Aorta (tissue), 5 donors: ENCODE measurements at regions of chr10 and their contacts with region 1.

Region 1: GRCh38 chr10:17001961-17002749 is 127.5 kb downstream of the CUBN start:
- DNase-seq: no peak
- ATAC-seq: peak; percentile 90
- H3K4me3 ChIP-seq: peak overlapping the region in 1 of 2 donors; percentile 32
- H3K27ac ChIP-seq: peak overlapping the region; percentile 87 to 99
- H3K4me1 ChIP-seq: peaks cover 0 to 8% of the 10 kb centered on the region in 2 donors
- H3K27me3 ChIP-seq: no peaks in the 10 kb centered on the region

Region 2: GRCh38 chr10:16843252-16843870 is 158.8 kb before region 1 on chr10:
- intact Hi-C with region 1: loop called (anchors 5 kb)
- DNase-seq: no peak
- ATAC-seq: peak; percentile 81
- H3K4me3 ChIP-seq: no peak overlapping the region
- H3K27ac ChIP-seq: no peak overlapping the region
- H3K4me1 ChIP-seq: no peaks in the 10 kb centered on the region
- H3K27me3 ChIP-seq: no peaks in the 10 kb centered on the region

Region 3: DNA sequence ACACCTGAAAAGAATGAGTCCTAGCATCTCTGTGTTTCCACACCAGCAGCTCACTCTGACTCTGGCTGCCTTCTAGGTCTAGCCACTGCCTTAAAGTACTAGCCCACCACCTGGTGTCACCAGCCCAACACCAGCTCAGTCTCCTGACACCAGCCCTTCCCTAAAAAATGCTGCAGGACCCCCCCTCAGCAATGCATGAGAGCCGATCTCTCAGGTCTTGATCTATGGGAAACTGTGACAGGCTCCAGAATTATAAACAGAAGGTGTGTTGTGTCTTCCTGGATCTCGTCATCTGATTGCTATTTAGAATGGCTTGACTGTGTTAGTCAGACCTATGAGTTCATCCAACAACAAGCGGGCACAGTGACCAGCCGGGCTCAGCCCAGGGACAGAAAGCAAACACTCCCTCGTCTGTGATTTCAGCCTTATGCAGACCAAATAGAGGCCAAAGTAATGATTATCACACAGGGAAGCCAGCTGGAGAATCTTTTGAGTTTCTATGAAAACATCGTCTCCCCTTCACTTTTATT is 60.9 kb after region 1 on chr10:
- intact Hi-C with region 1: loop called in 1 of 2 experiments (anchors 10 kb)
- DNase-seq: peak; percentile 81 to 86
- ATAC-seq: peak; percentile 88
- H3K4me3 ChIP-seq: no peak overlapping the region
- H3K27ac ChIP-seq: peak overlapping the region; percentile 23 to 100
- H3K4me1 ChIP-seq: peaks cover 0 to 2% of the 10 kb centered on the region in 2 donors
- H3K27me3 ChIP-seq: no peaks in the 10 kb centered on the region

Region 4: DNA sequence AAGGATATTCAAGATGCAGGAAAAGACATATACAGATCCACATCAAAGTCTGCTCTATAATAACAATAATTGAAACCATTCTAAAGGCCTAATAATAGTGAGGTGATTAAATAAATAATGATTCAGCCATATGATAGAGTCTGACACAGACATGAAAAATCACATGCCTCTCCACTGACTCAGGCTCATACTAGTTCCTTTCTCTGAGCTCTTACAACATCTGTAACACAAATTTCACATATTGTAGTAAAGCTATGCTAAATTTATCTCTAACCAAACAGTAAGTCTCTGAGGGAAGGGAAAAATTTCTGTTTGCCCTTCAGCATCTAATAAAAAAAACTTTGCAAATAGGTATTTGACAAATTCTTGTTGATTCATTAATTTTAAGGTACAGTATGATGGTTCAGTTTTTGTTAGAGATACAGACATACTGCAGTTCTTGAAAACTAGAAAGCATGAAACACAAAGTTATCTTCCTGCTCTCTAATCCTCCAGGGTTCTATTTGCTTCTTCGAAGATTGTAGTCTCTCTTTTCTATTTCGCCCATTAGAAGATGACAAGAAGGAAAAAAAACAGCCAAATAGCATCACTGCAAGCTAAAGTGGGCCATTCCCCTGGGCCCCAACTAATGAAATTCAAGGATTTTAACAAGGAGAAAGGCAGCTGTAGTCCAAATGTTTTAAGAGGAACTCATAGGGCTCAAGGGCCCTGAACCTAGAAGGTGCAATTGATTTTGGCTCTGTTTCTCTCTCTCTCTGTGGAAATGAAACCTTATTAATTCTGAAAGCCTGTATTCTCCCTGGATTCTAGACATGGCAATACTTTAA is 73.6 kb after region 1 on chr10:
- intact Hi-C with region 1: loop called in 1 of 2 experiments (anchors 5 kb)
- DNase-seq: no peak
- ATAC-seq: peak; percentile 84
- H3K4me3 ChIP-seq: peak overlapping the region in 1 of 2 donors; percentile 26
- H3K27ac ChIP-seq: peak overlapping the region; percentile 84 to 90
- H3K4me1 ChIP-seq: peaks cover 2 to 9% of the 10 kb centered on the region in 2 donors
- H3K27me3 ChIP-seq: no peaks in the 10 kb centered on the region

Region 5: DNA sequence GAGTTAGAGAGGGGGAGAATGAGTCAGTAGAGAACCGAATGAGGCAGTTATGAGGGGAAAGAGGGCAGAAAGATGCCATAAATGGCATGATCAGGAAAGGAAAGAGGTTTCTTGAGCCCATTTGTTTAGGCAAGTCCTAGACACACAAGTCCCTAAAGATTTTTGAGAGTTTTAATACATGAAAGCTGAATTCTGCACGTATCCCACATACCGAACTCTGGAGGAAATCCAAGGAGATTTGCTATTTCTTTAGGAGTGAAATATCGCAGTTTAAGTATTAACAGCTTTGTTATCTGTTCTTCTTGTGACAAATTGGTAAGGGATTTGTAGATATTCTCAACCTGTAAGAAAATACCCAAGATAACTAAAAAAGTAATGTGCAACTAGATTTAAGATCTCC is 151.1 kb after region 1 on chr10:
- intact Hi-C with region 1: loop called in 1 of 2 experiments (anchors 10 kb)
- DNase-seq: no peak
- ATAC-seq: no peak
- H3K4me3 ChIP-seq: no peak overlapping the region
- H3K27ac ChIP-seq: peak overlapping the region; percentile 97
- H3K4me1 ChIP-seq: peaks cover 3 to 5% of the 10 kb centered on the region in 2 donors
- H3K27me3 ChIP-seq: no peaks in the 10 kb centered on the region

Region 6: DNA sequence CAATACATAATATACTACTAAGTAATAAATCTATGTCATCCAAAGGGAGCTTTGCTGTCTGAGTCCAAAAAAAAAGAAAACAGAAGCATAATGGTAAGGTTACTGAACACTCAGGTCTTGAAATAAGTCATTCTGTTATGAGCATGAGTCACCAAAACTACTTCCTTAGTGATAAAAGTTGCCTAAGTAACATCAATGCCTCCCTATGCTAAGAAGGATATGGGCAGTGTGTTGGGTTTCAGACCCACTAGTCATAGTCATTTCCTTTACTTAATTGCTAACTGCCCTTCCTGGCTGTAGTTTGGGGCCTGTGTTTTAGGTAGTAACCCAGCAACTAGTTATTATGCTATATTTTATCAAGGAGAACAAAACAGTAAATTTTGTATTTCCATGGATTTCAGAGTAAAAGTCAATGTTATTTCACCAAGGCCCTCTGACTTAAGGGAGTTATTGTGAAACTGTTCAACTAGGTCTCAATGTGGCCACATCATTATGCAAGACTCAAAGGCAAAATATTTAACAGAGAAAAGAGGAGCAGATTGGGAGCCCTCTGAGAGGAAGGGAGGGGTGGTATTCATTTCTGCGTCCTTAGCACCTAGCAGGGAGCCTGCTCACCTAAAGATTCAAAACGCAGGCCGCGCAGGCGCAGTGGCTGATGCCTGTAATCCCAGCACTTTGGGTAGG is 214.2 kb after region 1 on chr10:
- intact Hi-C with region 1: loop called in 1 of 2 experiments (anchors 5 kb)
- DNase-seq: no peak
- ATAC-seq: peak; percentile 92
- H3K4me3 ChIP-seq: no peak overlapping the region
- H3K27ac ChIP-seq: peak overlapping the region; percentile 80 to 100
- H3K4me1 ChIP-seq: peaks cover 0 to 4% of the 10 kb centered on the region in 2 donors
- H3K27me3 ChIP-seq: no peaks in the 10 kb centered on the region

Region 7: DNA sequence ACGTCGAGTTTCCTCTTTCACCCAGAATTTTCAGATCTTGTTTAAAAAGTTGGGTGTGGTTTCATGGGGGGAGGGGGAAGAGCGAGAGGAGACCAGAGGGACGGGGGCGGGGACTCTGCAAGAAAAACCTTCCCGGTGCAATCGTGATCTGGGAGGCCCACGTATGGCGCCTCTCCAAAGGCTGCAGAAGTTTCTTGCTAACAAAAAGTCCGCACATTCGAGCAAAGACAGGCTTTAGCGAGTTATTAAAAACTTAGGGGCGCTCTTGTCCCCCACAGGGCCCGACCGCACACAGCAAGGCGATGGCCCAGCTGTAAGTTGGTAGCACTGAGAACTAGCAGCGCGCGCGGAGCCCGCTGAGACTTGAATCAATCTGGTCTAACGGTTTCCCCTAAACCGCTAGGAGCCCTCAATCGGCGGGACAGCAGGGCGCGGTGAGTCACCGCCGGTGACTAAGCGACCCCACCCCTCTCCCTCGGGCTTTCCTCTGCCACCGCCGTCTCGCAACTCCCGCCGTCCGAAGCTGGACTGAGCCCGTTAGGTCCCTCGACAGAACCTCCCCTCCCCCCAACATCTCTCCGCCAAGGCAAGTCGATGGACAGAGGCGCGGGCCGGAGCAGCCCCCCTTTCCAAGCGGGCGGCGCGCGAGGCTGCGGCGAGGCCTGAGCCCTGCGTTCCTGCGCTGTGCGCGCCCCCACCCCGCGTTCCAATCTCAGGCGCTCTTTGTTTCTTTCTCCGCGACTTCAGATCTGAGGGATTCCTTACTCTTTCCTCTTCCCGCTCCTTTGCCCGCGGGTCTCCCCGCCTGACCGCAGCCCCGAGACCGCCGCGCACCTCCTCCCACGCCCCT is 226.2 kb after region 1 on chr10 and contains the start of gene VIM:
- intact Hi-C with region 1: loop called in 1 of 2 experiments (anchors 5 kb)
- DNase-seq: peak; percentile 98
- ATAC-seq: peak; percentile 90
- H3K4me3 ChIP-seq: peak within 1 kb of the TSS; percentile 47 to 96
- H3K27ac ChIP-seq: peak within 1 kb of the TSS; percentile 91 to 95
- H3K4me1 ChIP-seq: peaks cover 0 to 2% of the 10 kb centered on the region in 2 donors
- H3K27me3 ChIP-seq: no peaks in the 10 kb centered on the region
- total RNA-seq, gene VIM: 3,936 to 5,947 TPM